Right lobe of liver (tissue), 6 donors: ENCODE measurements at regions of chr12 and their contacts with region 1.

Region 1: DNA sequence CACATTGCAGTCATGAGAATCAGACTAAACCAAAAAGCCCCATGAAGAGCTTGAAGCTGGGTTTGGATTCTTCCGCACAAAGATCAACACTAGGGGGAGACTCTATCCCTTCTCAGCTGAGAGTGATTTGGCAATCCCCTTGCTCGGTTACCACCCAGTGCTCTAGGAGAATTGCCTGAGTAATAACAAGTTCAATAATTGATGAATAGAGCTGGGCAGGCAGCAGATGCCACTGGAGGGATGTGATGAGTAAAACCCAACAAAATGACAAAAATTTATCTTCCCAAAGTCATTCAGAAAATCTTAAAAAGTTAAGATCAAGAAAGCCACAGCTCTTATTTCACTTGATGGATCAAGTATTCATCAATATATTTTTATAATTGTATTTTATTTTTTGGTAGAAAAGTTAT is 185.6 kb upstream of the ARID2 start:
- DNase-seq: peak in 1 of 3 donors; percentile 56
- ATAC-seq: peak; percentile 99 to 100 (median 100)
- H3K4me3 ChIP-seq: no peak overlapping the region
- H3K27ac ChIP-seq: no peak overlapping the region
- H3K4me1 ChIP-seq: no peaks in the 10 kb centered on the region
- H3K27me3 ChIP-seq: no peaks in the 10 kb centered on the region
- CTCF ChIP-seq: peak; percentile 79 to 86 (median 83)
- POLR2A ChIP-seq: no peak

Region 2: DNA sequence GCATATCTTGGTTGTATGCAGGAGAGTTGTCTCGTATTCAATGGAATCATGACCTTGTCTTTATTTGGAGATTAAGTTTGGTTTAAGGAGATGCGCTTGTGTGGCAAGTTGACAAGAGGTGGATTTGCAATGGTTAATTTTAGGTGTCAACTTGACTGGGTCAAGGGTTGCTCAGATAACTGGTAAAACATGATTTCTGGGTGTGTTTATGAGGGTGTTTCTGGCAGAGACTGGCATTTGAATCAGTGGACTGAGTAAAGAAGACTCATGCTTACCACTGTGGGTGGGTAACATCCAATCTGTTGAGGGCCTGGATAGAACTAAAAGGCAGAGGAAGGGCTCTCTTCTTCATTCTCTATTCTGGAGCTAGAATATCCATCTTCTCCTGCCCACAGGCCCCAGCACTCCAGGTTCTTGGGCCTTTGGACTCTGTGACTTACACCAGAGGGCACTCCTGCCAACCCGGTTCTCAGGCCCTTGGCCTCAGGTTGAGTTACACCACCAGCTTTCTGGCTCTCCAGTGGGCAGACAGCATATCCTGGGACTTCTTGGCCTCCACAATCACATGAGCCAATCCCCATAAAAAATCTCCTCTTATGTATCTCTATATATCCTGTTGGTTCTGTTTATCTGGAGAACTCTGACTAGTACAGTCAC is 44.1 kb after region 1 on chr12:
- intact Hi-C with region 1: no loop called
- DNase-seq: peak; percentile 40 to 77 (median 75)
- ATAC-seq: peak; percentile 85 to 98 (median 94)
- H3K4me3 ChIP-seq: no peak overlapping the region
- H3K27ac ChIP-seq: no peak overlapping the region
- H3K4me1 ChIP-seq: peaks cover 0 to 14% (median 0%) of the 10 kb centered on the region in 4 donors
- H3K27me3 ChIP-seq: no peaks in the 10 kb centered on the region
- CTCF ChIP-seq: peak in 3 of 4 donors; percentile 7 to 48 (median 41)
- POLR2A ChIP-seq: no peak

Region 3: GRCh38 chr12:45644541-45644940 is 100.6 kb after region 1 on chr12:
- intact Hi-C with region 1: no loop called
- DNase-seq: no peak
- ATAC-seq: no peak
- H3K4me3 ChIP-seq: no peak overlapping the region
- H3K27ac ChIP-seq: no peak overlapping the region
- H3K4me1 ChIP-seq: peaks cover 0 to 6% (median 0%) of the 10 kb centered on the region in 4 donors
- H3K27me3 ChIP-seq: no peaks in the 10 kb centered on the region
- CTCF ChIP-seq: no peak
- POLR2A ChIP-seq: no peak

Region 4: GRCh38 chr12:45728630-45729232 is 184.8 kb after region 1 on chr12:
- intact Hi-C with region 1: loop called in 1 of 2 experiments (anchors 10 kb)
- DNase-seq: peak; percentile 95 to 99 (median 98)
- ATAC-seq: peak; percentile 74 to 86 (median 78)
- H3K4me3 ChIP-seq: peak overlapping the region; percentile 80 to 82 (median 81)
- H3K27ac ChIP-seq: peak overlapping the region; percentile 95 to 96 (median 95)
- H3K4me1 ChIP-seq: peaks cover 0 to 41% (median 19%) of the 10 kb centered on the region in 4 donors
- H3K27me3 ChIP-seq: no peaks in the 10 kb centered on the region
- CTCF ChIP-seq: peak; percentile 94 to 98 (median 96)
- POLR2A ChIP-seq: peak; percentile 95